Ascending aorta (tissue), 2 donors: ENCODE measurements at regions of chr9 and their contacts with region 1.

Region 1: GRCh38 chr9:115013998-115014397 is 83.6 kb upstream of the TNFSF8 start:
- DNase-seq: no peak
- H3K4me3 ChIP-seq: no peak overlapping the region
- H3K27ac ChIP-seq: no peak overlapping the region
- H3K4me1 ChIP-seq: no peaks in the 10 kb centered on the region
- H3K27me3 ChIP-seq: no peaks in the 10 kb centered on the region
- CTCF ChIP-seq: peak; percentile 76 to 80 (median 77)

Region 2: DNA sequence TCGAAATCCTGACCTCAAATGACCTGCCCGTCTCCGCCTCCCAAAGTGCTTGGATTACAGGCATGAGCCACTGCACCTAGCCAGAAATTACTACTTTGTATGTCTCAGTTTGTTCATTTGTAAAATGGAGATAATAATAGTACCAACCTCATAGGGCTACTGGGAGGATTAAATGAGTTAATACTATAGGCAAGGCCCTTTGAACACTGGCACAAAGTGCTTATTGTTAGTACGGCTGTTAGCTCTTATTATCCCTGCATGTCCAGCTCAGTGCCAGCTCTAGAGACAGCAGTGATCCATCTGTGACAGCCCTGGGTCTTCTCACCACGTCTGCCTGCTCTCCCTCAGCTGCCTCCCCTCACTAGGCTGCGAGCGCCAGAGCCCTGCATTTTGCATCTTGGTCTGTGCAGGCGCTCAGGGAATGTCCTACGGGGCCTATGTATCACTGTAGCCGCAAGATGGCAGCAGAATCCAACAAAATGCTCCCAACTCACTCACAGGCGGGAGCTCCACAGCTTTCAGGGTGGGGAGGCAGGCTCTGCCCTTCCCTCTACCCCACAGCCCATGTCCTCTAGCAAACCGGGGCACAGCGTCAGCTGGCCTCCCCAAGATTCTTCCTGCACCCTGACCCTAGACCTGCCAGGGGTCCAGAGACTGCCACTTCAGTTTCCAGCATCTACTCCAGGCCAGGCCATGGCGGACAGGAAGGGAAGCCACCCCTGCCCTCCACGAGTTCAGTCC is 608.5 kb before region 1 on chr9:
- intact Hi-C with region 1: loop called (anchors 2 kb)
- DNase-seq: peak in 1 of 2 donors; percentile 89
- H3K4me3 ChIP-seq: no peak overlapping the region
- H3K27ac ChIP-seq: no peak overlapping the region
- H3K4me1 ChIP-seq: no peaks in the 10 kb centered on the region
- H3K27me3 ChIP-seq: no peaks in the 10 kb centered on the region
- CTCF ChIP-seq: peak; percentile 78 to 87 (median 87)

Region 3: DNA sequence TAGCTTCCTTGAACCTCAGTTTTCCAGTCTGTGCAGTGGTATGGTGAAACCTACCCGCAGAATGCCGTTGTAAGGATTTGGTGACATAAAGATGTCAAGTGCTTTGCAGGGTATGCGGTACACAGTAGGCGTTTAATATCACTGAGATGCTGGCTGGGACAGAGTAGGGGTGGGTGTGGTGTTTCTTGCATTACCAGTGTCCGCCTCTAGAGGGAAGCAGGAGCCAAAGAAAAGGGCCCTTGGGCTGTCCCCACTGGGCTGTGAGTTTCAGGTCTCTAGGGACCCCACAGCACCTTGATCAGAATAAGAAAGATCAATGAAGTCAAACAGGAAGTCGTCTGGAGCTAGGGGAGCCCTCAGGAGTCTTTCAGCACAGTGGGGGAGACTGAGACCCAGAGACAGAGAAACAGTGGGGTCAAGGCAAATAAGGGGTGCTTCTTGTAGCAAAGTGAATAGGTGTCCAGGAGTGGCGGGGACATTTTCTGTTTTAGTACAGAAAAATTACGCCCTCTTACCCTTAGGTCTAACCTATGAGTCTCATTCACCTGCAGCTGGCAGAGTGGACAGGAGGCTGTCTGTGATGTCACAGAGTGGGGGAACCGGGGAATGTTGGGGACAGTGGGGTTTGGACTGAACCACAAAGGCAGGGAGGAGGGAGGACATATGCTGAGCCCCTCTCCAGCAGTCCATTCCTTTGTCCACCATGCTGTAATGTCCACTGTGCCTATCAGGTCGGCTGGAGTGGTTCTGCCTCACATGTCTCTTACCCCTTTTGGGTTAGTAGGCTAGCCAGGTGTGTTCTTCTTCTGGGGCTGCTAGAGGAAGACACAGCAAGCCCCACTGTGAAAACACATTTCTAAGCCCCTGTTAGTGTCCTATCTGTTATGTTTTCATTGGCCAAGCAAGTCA is 351.7 kb before region 1 on chr9:
- intact Hi-C with region 1: loop called (anchors 5 kb)
- DNase-seq: no peak
- H3K4me3 ChIP-seq: no peak overlapping the region
- H3K27ac ChIP-seq: no peak overlapping the region
- H3K4me1 ChIP-seq: no peaks in the 10 kb centered on the region
- H3K27me3 ChIP-seq: no peaks in the 10 kb centered on the region
- CTCF ChIP-seq: peak; percentile 64 to 73 (median 67)

Region 4: GRCh38 chr9:114681594-114682332 is 332.2 kb before region 1 on chr9 and contains the start of gene TEX48:
- intact Hi-C with region 1: loop called (anchors 2 kb)
- DNase-seq: peak in 1 of 2 donors; percentile 67
- H3K4me3 ChIP-seq: no peak within 1 kb of the TSS
- H3K27ac ChIP-seq: no peak within 1 kb of the TSS
- H3K4me1 ChIP-seq: peaks cover 0 to 4% of the 10 kb centered on the region in 2 donors
- H3K27me3 ChIP-seq: no peaks in the 10 kb centered on the region
- CTCF ChIP-seq: peak; percentile 40 to 58 (median 43)
- total RNA-seq, gene TEX48: not detected

Region 5: DNA sequence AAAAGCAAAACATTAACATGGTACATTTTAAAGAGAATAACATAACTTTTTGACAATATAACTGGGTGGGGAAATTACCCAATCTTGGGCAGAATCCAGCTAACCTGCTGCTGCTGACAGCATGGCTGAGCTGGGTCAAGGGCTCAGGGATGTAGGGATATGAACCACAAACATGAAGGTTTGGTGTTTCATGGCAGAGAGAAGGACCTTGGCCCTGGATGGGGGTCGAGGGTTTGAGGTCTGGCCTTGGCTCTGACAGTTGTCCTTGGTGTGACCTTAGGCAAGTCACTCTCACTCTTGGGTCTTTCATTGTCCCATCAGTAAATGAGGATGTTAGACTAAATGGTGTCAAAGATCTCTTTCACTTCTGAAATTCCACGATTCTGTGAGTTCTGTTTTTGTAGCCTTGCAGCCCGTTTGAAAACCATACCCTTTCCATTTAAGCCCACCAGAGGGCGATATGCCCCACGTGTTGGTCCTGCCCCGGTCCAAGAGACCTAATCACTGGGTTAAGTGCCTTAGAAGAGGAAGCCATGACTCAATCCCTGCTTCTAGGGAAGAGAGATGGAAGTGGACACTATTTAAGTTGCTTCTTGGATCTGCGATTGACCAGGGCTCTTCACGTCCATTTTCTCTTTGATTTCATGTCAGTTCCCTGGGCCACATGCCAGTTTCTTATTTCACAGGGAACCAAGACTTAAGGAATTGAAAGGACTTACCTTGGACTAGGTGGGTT is 275.2 kb before region 1 on chr9:
- intact Hi-C with region 1: loop called (anchors 1 kb)
- DNase-seq: peak in 1 of 2 donors; percentile 86
- H3K4me3 ChIP-seq: no peak overlapping the region
- H3K27ac ChIP-seq: no peak overlapping the region
- H3K4me1 ChIP-seq: no peaks in the 10 kb centered on the region
- H3K27me3 ChIP-seq: no peaks in the 10 kb centered on the region
- CTCF ChIP-seq: peak; percentile 70 to 76 (median 70)

Region 6: GRCh38 chr9:114906908-114907571 is 107.0 kb before region 1 on chr9:
- intact Hi-C with region 1: loop called (anchors 5 kb)
- DNase-seq: no peak
- H3K4me3 ChIP-seq: no peak overlapping the region
- H3K27ac ChIP-seq: no peak overlapping the region
- H3K4me1 ChIP-seq: no peaks in the 10 kb centered on the region
- H3K27me3 ChIP-seq: no peaks in the 10 kb centered on the region
- CTCF ChIP-seq: peak in 2 of 3 experiments; percentile 13 to 28

Region 7: GRCh38 chr9:115080242-115080641 is 66.2 kb after region 1 on chr9:
- intact Hi-C with region 1: no loop called
- DNase-seq: no peak
- H3K4me3 ChIP-seq: no peak overlapping the region
- H3K27ac ChIP-seq: no peak overlapping the region
- H3K4me1 ChIP-seq: no peaks in the 10 kb centered on the region
- H3K27me3 ChIP-seq: no peaks in the 10 kb centered on the region
- CTCF ChIP-seq: no peak